ENCODE measurements at regions of chr5 and their contacts with region 1.

Region 1: DNA sequence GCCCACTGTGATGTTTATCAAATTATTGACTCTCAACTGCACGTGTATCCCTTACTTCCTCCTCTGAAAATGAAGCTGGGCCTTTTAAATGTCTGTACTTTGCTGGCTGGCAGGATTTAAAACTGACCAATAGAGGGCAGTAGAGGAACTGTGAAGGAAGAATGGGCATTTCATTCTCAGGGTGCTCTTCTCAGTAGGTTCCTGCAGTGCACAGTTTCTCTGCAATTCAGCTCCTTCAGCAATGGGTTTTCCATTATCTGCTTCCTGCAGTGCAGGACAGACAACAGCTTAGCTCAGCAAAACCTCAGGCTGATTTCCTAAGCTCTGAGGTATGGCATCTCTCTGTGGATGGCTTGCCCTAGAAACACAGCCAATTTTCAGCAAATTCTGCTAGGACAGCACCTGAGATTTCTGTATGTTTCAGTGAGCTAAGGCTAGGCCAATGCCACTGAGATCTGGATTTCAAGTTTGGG is 298.4 kb upstream of the PRDM9 start:
- DNase-seq: peak; percentile 9
- ATAC-seq: peak; percentile 97
- H3K4me3 ChIP-seq: no peak overlapping the region
- H3K27ac ChIP-seq: no peak overlapping the region
- H3K4me1 ChIP-seq: no peaks in the 10 kb centered on the region
- H3K27me3 ChIP-seq: no peaks in the 10 kb centered on the region
- CTCF ChIP-seq: peak; percentile 67 to 73 (median 72)
- EP300 ChIP-seq: no peak
- POLR2A ChIP-seq: no peak
- RAD21 ChIP-seq: peak; percentile 55

Region 2: GRCh38 chr5:23007221-23007620 is 201.8 kb before region 1 on chr5:
- CTCF ChIA-PET with region 1: no interaction called
- POLR2A ChIA-PET with region 1: no interaction called
- RAD21 ChIA-PET with region 1: no interaction called
- SMC1A ChIA-PET with region 1: no interaction called
- in situ Hi-C with region 1: no loop called
- intact Hi-C with region 1: no loop called
- DNase-seq: no peak
- ATAC-seq: peak; percentile 44
- H3K4me3 ChIP-seq: no peak overlapping the region
- H3K27ac ChIP-seq: no peak overlapping the region
- H3K4me1 ChIP-seq: no peaks in the 10 kb centered on the region
- H3K27me3 ChIP-seq: no peaks in the 10 kb centered on the region
- CTCF ChIP-seq: no peak
- EP300 ChIP-seq: no peak
- POLR2A ChIP-seq: no peak
- RAD21 ChIP-seq: no peak

Region 3: DNA sequence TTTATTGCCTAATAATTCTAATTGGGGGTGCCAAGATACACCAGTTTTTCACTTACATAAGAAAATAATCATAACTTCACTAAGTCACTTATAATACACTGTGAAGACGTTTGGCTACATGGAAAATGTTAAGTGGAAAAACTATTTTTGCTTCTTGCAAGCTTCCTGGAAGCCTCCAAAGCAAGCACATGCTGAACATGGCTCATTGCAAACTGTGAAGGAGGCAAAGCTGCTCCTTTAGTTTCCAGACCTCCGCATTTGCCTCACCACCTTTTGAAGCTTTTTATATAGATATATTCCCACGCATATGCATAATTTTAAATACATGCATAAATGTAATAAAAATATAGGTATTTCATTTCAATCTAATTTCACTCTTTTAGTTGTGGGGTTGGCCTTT is 12.8 kb after region 1 on chr5:
- CTCF ChIA-PET with region 1: interaction called, 10 read pairs
- POLR2A ChIA-PET with region 1: no interaction called
- RAD21 ChIA-PET with region 1: interaction called, 3 read pairs
- SMC1A ChIA-PET with region 1: no interaction called
- in situ Hi-C with region 1: no loop called
- intact Hi-C with region 1: no loop called
- DNase-seq: no peak
- ATAC-seq: no peak
- H3K4me3 ChIP-seq: no peak overlapping the region
- H3K27ac ChIP-seq: no peak overlapping the region
- H3K4me1 ChIP-seq: no peaks in the 10 kb centered on the region
- H3K27me3 ChIP-seq: no peaks in the 10 kb centered on the region
- CTCF ChIP-seq: no peak
- EP300 ChIP-seq: no peak
- POLR2A ChIP-seq: no peak
- RAD21 ChIP-seq: no peak